ENCODE measurements at regions of chr20 and their contacts with region 1.

Region 1: GRCh38 chr20:3696200-3696599 is 14.4 kb upstream of the ADAM33 start:
- DNase-seq: no peak
- H3K4me3 ChIP-seq: no peak overlapping the region
- H3K27ac ChIP-seq: no peak overlapping the region
- H3K4me1 ChIP-seq: no peaks in the 10 kb centered on the region
- H3K27me3 ChIP-seq: no peaks in the 10 kb centered on the region
- CTCF ChIP-seq: peak; percentile 37 to 41

Region 2: DNA sequence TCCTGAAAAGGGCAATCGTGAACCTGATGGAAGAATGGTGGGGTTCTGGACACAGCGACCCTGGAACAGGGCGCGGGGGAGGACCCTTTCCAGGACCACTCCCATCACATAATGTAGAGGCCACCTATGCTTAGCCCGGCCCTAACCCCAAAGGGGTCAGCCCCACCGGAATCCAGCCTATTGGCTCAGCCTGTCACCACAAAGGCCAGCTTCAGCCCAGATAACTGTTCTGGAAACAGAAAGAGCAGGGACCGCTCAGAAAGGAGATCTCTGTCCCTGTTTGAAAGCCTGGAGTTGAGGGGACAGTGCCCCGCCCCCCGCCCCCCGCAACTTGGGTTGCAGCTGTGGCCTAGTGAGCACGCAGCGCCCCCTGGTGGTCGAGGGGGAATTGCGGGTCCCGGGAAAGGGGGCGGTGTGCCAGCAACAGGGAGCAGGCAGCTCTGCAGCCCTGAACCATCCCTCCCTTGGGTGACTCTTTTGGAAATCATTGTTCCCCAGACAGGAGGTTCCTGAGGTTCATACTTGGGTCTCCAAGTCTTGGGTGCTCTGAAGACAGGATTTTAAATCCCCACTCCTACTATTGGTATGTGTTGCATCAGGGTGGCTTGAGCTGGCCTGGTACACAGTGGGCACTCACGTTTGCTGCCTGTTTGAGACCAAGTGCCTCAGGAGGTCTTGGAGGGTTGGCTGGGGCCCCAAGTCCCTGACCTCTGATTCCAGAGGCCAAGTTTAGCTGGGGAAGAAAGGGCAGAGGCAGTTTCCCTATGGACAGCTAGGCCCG is 14.7 kb after region 1 on chr20:
- CTCF ChIA-PET with region 1: interaction called, 32 read pairs
- dilution Hi-C with region 1: no loop called
- in situ Hi-C with region 1: no loop called
- intact Hi-C with region 1: no loop called
- DNase-seq: peak; percentile 21
- H3K4me3 ChIP-seq: no peak overlapping the region
- H3K27ac ChIP-seq: no peak overlapping the region
- H3K4me1 ChIP-seq: no peaks in the 10 kb centered on the region
- H3K27me3 ChIP-seq: no peaks in the 10 kb centered on the region
- CTCF ChIP-seq: peak; percentile 76 to 89

Region 3: GRCh38 chr20:3739054-3739925 is 43.1 kb after region 1 on chr20:
- CTCF ChIA-PET with region 1: interaction called, 18 read pairs
- dilution Hi-C with region 1: loop called (anchors 5 kb)
- in situ Hi-C with region 1: no loop called
- intact Hi-C with region 1: no loop called
- DNase-seq: no peak
- H3K4me3 ChIP-seq: no peak overlapping the region
- H3K27ac ChIP-seq: no peak overlapping the region
- H3K4me1 ChIP-seq: no peaks in the 10 kb centered on the region
- H3K27me3 ChIP-seq: no peaks in the 10 kb centered on the region
- CTCF ChIP-seq: no peak

Measured in mammary epithelial cell (primary cell).